Head of caudate nucleus (tissue), 42 donors: ENCODE measurements at regions of chr7 and their contacts with region 1.

Region 1: GRCh38 chr7:37833107-37833817 is 15.1 kb upstream of the NME8 start:
- DNase-seq: peak; percentile 7 to 82 (median 61)

Region 2: GRCh38 chr7:37208528-37208927 is 624.7 kb before region 1 on chr7:
- intact Hi-C with region 1: loop called (anchors 5 kb)
- DNase-seq: peak in 41 of 42 donors; percentile 11 to 89 (median 74)

Region 3: DNA sequence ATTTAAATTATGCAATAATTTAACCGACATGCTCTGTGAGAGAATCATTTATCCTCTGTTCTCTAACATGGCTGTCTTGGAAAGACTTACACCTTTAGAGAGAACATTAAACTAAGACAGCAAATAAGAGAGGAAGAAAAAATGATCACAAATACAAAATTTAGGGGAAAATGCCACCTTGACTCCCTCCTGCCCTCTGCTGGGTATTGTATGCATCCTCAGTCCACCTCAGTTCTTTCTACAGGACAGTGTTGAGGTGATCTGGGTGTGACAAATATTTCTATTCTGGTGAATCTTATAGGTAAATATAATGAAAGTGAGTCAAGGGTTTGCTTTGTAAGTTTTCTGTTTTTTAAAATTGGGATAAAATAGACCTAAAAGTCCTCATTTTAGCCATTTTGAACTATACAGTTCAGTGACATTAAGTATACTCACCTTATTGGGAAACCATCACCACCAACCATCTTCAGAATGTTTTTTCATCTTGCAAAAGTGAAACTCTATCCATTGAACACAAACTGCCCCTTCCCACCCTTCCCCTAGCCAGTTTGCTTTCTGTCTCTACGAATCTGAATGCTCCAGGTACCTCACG is 323.1 kb before region 1 on chr7:
- intact Hi-C with region 1: loop called (anchors 10 kb)
- DNase-seq: peak in 24 of 42 donors; percentile 14 to 80 (median 40)

Region 4: GRCh38 chr7:37786741-37787569 is 46.3 kb before region 1 on chr7:
- intact Hi-C with region 1: no loop called
- DNase-seq: no peak

Region 5: GRCh38 chr7:38215735-38216670 is 382.7 kb after region 1 on chr7:
- intact Hi-C with region 1: no loop called
- DNase-seq: peak; percentile 53 to 93 (median 78)